ENCODE measurements at regions of chr16 and their contacts with region 1.

Region 1: GRCh38 chr16:47018223-47018891 is 44.9 kb upstream of the DNAJA2 start:
- DNase-seq: peak; percentile 73
- H3K4me3 Mint-ChIP-seq: no peak overlapping the region
- H3K27ac Mint-ChIP-seq: no peak overlapping the region
- H3K4me1 Mint-ChIP-seq: peaks cover 24% of the 10 kb centered on the region
- H3K27me3 Mint-ChIP-seq: no peaks in the 10 kb centered on the region

Region 2: GRCh38 chr16:46871587-46871986 is 146.8 kb before region 1 on chr16:
- CTCF ChIA-PET with region 1: no interaction called
- intact Hi-C with region 1: no loop called
- DNase-seq: no peak
- H3K4me3 Mint-ChIP-seq: no peak overlapping the region
- H3K27ac Mint-ChIP-seq: no peak overlapping the region
- H3K4me1 Mint-ChIP-seq: no peaks in the 10 kb centered on the region
- H3K27me3 Mint-ChIP-seq: no peaks in the 10 kb centered on the region

Region 3: GRCh38 chr16:46947900-46948547 is 70.3 kb before region 1 on chr16:
- CTCF ChIA-PET with region 1: interaction called, 5 read pairs
- intact Hi-C with region 1: loop called (anchors 1 kb)
- DNase-seq: peak; percentile 63
- H3K4me3 Mint-ChIP-seq: no peak overlapping the region
- H3K27ac Mint-ChIP-seq: no peak overlapping the region
- H3K4me1 Mint-ChIP-seq: peaks cover 14% of the 10 kb centered on the region
- H3K27me3 Mint-ChIP-seq: no peaks in the 10 kb centered on the region

Region 4: GRCh38 chr16:47699106-47699505 is 680.7 kb after region 1 on chr16:
- CTCF ChIA-PET with region 1: no interaction called
- intact Hi-C with region 1: no loop called
- DNase-seq: no peak
- H3K4me3 Mint-ChIP-seq: no peak overlapping the region
- H3K27ac Mint-ChIP-seq: no peak overlapping the region
- H3K4me1 Mint-ChIP-seq: no peaks in the 10 kb centered on the region
- H3K27me3 Mint-ChIP-seq: no peaks in the 10 kb centered on the region